Activated CD4-positive, alpha-beta memory T cell treated with anti-CD3 and anti-CD28 coated beads for 36 hours (primary cell): ENCODE measurements at regions of chr19 and their contacts with region 1.

Region 1: GRCh38 chr19:45886427-45887199 is 672 bp upstream of the IRF2BP1 start:
- DNase-seq: peak; percentile 95
- H3K4me3 Mint-ChIP-seq: peak overlapping the region; percentile 85
- H3K27ac Mint-ChIP-seq: peak overlapping the region; percentile 92
- H3K4me1 Mint-ChIP-seq: peaks cover 22% of the 10 kb centered on the region
- H3K27me3 Mint-ChIP-seq: no peaks in the 10 kb centered on the region

Region 2: GRCh38 chr19:45506246-45506990 is 380.2 kb before region 1 on chr19:
- CTCF ChIA-PET with region 1: no interaction called
- POLR2A ChIA-PET with region 1: no interaction called
- intact Hi-C with region 1: loop called (anchors 1 kb)
- DNase-seq: peak; percentile 99
- H3K4me3 Mint-ChIP-seq: peak overlapping the region; percentile 86
- H3K27ac Mint-ChIP-seq: peak overlapping the region; percentile 94
- H3K4me1 Mint-ChIP-seq: peaks cover 35% of the 10 kb centered on the region
- H3K27me3 Mint-ChIP-seq: no peaks in the 10 kb centered on the region

Region 3: DNA sequence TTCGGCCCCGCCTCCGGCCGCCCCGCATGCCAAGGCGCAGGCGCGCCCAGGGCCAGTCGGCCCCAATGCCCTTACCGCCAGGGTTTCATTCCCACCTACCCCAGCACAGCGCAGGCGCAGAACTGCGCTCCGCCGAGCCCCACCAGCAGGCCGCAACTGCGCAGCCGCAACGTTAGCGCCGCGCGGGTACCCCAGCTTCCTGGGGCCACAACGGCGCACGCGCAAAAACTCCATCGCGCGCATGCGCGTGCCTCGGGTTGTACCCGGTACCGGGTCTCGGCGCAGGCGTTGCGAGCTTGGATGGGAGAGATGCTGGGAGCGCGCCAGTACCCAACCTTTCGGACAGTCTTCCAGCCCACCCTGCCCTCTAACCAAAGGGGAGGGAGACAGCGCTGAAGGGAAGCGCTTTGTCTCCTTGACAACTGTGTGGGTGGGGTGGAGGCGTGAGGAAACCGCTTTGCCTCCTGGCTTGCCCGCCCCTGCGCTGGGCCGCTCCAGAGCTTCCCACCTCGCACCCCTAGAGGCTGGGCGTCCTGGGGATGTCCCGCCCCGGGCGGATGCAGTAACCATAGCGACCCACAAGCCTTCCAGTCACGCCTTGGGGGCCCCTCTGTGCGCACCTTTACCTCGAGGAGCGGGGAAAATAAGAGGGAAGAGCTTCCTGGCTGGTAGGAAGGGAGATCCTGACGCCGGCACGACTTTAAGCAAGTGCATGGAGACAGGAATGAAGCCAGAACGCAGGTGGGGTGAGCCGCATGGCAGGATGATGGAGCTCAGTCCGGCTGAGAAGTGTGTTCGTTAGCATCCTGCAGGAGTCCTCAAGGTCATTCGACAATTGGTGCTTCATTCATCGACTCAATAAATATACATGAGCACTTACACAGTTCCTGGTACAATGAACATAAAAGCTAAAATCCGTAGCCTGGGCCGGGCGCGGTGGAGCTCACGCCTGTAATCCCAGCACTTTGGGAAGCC is 16.3 kb after region 1 on chr19:
- CTCF ChIA-PET with region 1: interaction called, 28 read pairs
- POLR2A ChIA-PET with region 1: interaction called, 25 read pairs
- intact Hi-C with region 1: loop called (anchors 1 kb)
- DNase-seq: peak; percentile 100
- H3K4me3 Mint-ChIP-seq: peak overlapping the region; percentile 93
- H3K27ac Mint-ChIP-seq: peak overlapping the region; percentile 80
- H3K4me1 Mint-ChIP-seq: peaks cover 7% of the 10 kb centered on the region
- H3K27me3 Mint-ChIP-seq: no peaks in the 10 kb centered on the region

Region 4: DNA sequence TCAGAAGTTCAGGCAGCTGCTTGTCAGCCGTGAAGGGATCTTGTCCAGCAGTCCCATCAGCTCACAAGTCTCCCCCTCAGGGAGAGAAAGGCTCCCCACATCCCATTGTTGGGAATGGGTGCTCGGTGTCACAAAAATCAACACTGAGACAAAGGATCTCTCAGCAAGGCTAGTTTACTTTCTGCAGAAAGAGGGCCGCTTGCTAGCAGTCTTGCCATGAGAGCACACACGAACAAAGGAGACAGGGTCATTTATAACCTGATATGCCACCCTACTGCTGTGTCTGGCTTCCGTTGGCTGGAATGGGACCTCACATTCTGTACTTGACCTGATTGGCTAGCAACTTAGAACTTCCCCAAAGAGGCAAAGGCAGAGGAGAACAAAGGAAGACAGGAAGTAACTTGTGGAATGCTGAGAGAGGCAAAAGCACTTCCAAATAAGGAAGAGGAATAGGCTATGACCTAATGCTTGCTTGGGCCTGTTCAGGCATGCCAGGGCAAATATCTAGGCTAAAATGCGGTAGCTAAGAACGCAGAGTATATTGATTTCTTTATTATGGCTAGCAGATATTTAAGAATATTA is 246.6 kb after region 1 on chr19:
- CTCF ChIA-PET with region 1: no interaction called
- POLR2A ChIA-PET with region 1: no interaction called
- intact Hi-C with region 1: no loop called
- DNase-seq: no peak
- H3K4me3 Mint-ChIP-seq: no peak overlapping the region
- H3K27ac Mint-ChIP-seq: no peak overlapping the region
- H3K4me1 Mint-ChIP-seq: peaks cover 3% of the 10 kb centered on the region
- H3K27me3 Mint-ChIP-seq: peaks cover 50% of the 10 kb centered on the region